ENCODE measurements at regions of chr10 and their contacts with region 1.

Region 1: DNA sequence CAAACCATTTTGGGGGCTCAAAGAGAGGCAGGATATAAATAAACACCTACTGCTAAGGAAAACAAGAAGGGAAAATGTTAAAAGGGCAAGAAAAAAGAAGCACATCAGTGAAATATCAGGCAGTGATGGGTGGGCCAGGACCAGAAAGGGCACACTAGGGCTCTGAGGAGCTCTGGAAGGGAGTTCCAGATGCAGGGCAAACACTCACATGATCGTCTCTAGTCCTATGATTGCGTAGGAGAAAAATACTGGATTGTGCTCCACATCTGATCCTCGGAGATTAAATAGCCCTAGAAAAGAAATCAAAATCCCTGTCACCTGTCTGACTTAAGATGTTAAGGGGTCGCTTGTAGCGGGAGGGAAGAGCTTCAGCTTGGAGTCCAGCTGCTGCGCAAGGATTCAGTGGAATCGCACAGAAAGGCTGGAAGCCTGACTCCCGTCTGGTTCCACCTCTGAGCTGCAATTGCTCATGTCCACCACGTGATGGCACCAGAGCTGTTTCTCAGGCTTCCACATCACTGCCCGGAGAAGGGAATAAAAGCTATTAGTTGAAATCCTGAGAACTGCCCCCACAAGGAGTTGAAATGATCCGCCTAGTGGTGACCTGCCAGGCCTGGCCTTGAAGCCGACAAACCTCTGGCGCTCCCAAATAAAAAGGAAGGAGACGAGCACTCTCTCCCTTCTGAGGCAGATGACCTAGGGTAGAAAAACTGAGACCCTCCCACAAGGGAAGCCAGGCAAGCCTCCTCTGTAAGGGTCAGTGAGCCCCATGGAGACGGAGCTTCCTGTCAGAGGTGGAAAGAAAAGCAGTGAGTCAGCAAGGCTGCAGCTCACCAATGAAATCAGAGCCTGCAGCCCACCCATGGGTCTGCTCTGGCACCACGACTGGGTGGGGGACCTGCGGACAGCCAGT is 39.2 kb downstream of the XPNPEP1 start:
- DNase-seq: peak; percentile 86

Region 2: DNA sequence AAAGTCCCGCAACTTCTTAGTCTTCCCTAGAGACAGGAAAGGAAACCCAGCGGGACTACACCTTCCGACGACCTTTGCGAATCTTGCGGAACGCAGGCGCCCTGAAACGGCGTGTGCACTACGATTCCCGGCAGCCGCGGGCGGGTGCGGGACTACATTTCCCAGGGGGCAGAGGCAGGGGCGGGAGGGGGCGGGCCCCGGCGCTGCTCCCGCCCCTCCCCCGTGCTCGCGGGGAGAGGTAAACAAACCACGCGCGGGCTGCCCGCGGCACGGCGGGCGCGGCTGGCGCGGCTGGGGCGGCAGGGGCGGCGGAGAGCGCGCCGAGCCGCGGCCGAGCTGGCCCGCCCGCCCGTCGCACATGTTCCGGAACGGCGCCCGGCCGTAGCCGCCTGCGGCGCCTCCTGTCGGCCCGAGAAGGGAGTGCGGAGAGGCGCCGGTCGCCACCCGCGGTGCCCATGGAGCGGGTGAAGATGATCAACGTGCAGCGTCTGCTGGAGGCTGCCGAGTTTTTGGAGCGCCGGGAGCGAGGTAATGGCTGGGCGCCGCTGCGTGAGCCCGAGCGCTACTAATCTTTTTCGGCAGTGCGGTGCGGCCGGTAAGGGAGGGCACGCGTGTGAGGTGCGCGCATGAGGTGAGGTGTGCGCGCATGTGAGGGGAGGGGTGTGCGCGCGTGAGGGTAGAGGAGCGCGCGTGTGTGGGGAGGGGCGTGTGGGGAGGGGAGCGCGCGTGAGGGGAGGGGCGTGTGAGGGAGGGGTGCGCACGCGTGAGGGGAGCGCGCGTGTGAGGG is 341.8 kb after region 1 on chr10:
- in situ Hi-C with region 1: loop called (anchors 25 kb)
- DNase-seq: peak; percentile 87